Activated naive CD8-positive, alpha-beta T cell treated with anti-CD3 and anti-CD28 coated beads, Interleukin-2, amount 10 ng/mL, durations not matched to agents 7 days and 5 days (primary cell): ENCODE measurements at regions of chr17 and their contacts with region 1.

Region 1: GRCh38 chr17:75289115-75289831 is at the start of gene SLC25A19:
- DNase-seq: peak; percentile 95
- ATAC-seq: peak; percentile 95
- H3K4me3 Mint-ChIP-seq: peak within 1 kb of the TSS; percentile 97
- H3K27ac Mint-ChIP-seq: peak within 1 kb of the TSS; percentile 100
- H3K4me1 Mint-ChIP-seq: peaks cover 15% of the 10 kb centered on the region
- H3K27me3 Mint-ChIP-seq: no peaks in the 10 kb centered on the region
- total RNA-seq, gene SLC25A19: 26.7 to 27.9 TPM

Region 2: DNA sequence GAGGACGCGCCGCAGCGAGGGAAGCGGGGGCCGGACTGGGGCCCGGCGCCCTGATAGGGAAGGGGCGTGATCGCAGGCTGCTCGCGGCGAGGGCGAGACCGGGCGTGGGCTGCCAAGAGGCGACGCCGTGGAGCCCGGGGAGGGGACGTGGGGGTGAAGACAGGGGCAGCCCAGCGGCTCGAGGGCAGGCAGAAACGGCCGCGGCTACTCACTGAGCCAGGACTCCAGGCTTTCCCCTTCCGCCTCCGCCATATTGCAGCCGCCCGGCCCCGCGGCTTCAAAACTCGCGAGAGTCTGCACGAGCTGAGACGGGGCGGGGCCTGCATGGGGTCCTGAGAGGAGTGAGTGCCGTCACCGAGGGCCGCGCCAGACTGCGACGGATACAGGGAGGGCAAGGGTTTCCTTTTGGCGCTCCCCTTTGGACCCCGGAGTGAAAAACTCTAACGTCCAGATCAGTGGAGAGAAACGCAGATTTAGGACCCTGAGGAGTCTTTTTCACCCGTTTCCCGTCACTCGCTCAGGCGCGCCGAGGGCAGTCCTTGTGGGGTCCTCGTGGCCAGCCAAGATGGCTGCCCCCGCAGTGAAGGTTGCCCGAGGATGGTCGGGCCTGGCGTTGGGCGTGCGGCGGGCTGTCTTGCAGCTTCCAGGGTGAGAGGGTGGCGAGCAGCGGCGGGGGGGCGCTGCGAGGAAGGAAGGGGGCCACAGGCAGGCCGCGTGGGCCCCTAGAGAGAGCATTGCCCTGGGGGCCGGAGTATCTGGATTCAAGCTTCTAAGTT is 27.7 kb before region 1 on chr17 and contains the starts of genes GGA3 and MRPS7:
- POLR2A ChIA-PET with region 1: interaction called, 40 read pairs
- DNase-seq: peak; percentile 98
- ATAC-seq: peak; percentile 90
- H3K4me3 Mint-ChIP-seq: peak within 1 kb of the TSS; percentile 99
- H3K27ac Mint-ChIP-seq: peak within 1 kb of the TSS; percentile 99
- H3K4me1 Mint-ChIP-seq: peaks cover 30% of the 10 kb centered on the region
- H3K27me3 Mint-ChIP-seq: no peaks in the 10 kb centered on the region
- total RNA-seq, gene GGA3: 92.9 to 95.2 TPM
- total RNA-seq, gene MRPS7: 34.0 to 36.1 TPM

Region 3: GRCh38 chr17:75271233-75271954 is 17.9 kb before region 1 on chr17:
- POLR2A ChIA-PET with region 1: interaction called, 86 read pairs
- DNase-seq: peak; percentile 98
- ATAC-seq: peak; percentile 79
- H3K4me3 Mint-ChIP-seq: peak overlapping the region; percentile 89
- H3K27ac Mint-ChIP-seq: peak overlapping the region; percentile 89
- H3K4me1 Mint-ChIP-seq: peaks cover 28% of the 10 kb centered on the region
- H3K27me3 Mint-ChIP-seq: no peaks in the 10 kb centered on the region

Region 4: DNA sequence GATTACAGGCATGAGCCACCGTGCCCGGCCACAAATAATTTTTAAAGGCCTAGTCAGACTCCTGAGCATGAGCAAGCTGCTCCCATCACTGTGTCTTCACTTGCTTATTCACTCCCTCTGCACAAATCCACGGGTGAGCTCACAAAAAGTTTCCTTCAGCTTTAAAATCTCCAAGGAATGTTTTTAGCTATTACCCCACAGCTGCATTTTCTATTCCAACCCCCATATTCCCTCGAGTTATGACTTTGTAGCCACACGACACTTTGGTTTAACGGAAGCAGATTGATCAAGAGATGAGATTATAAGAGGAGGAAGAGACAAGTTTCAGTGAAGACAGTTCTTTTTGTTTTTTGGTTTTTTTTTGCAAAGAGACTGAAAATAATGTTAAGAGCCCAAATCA is 49.1 kb after region 1 on chr17:
- POLR2A ChIA-PET with region 1: interaction called, 12 read pairs
- DNase-seq: no peak
- ATAC-seq: peak; percentile 33
- H3K4me3 Mint-ChIP-seq: peak overlapping the region; percentile 75
- H3K27ac Mint-ChIP-seq: peak overlapping the region; percentile 87
- H3K4me1 Mint-ChIP-seq: peaks cover 61% of the 10 kb centered on the region
- H3K27me3 Mint-ChIP-seq: no peaks in the 10 kb centered on the region

Region 5: GRCh38 chr17:75393523-75394331 is 104.5 kb after region 1 on chr17:
- POLR2A ChIA-PET with region 1: interaction called, 23 read pairs
- DNase-seq: peak; percentile 82
- ATAC-seq: peak; percentile 91
- H3K4me3 Mint-ChIP-seq: peak overlapping the region; percentile 99
- H3K27ac Mint-ChIP-seq: peak overlapping the region; percentile 83
- H3K4me1 Mint-ChIP-seq: peaks cover 59% of the 10 kb centered on the region
- H3K27me3 Mint-ChIP-seq: no peaks in the 10 kb centered on the region

Region 6: DNA sequence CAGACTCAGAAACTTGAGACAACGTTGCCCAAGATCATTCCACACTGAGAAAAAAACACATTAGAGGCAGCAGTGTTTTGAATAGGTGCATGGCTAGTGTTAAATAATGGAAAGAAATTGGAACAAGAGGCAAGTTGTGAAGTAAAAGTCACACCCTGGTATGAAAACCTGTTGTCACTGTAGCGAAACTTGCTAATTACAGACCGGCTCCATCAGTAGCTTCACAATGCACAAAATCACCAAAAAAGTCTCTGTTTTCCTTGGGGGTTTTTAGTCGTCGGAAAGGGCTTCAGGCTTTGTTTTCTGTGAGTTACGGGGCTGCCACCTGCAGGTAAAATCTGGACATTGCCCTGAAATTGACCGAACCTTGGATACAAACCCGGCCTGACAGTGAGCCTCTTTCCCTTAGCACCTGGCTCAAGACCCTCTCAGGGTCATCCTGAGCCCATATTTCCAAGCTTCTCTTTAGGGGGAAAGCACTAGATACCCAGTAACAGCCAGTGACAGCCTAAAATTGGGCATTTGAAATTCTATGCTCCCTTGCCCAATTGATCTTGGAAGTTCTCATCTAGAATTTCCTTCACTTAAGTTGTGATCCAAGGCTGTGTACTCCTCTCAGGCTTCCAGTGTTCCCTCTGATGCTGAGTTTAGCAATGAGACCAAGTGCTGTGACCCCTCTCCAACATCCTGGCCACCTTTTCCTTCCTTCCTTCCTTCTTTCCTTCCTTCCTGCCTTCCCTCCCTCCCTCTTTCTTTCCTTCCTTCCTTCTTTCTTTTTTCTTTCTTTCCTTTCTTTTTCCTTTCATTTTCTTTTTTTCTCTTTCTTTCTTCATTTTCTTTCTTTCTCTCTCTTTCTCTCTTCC is 123.4 kb after region 1 on chr17:
- POLR2A ChIA-PET with region 1: interaction called, 12 read pairs
- DNase-seq: peak; percentile 78
- ATAC-seq: peak; percentile 70
- H3K4me3 Mint-ChIP-seq: peak overlapping the region; percentile 73
- H3K27ac Mint-ChIP-seq: peak overlapping the region; percentile 81
- H3K4me1 Mint-ChIP-seq: peaks cover 28% of the 10 kb centered on the region
- H3K27me3 Mint-ChIP-seq: peaks cover 19% of the 10 kb centered on the region